ENCODE measurements at regions of chr18 and their contacts with region 1.

Region 1: DNA sequence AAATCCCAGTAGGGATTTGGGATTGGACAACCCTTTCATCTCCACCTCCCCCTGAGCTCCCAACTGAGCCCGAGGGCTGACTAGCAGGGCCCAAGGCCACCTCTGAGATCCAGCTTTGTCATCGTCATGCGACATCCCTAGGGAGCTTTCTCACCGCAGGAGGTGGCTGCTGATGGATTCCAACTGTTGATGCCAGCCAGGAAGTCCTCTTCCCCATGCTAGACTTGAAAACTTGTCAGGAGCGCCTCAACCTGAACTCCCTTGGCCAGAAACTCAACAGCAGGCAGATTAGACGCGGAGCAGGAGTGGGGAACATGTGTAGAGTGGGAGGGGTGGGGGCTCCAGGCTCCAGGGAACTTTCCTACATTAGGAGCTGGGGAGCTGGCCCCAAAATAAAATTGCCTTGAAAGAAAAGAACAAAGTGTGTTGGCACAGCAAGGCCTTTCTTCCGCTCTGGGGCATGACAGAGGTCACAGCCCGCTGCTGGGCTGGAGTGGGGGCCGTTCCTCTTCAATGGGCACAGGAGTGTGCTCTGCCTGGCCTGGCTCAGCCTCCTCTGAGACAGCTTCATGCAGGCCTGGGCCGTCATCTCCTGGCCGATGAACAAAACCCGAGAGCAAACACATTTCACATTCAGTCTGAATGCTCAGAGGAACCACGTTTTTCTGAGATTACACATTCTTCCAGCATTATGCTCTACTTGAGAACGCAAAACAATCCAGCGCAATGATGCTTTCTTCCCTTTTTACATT is 34.5 kb downstream of the EMILIN2 start:
- DNase-seq: peak; percentile 85 to 86
- H3K4me3 ChIP-seq: no peak overlapping the region
- H3K27ac ChIP-seq: peak overlapping the region; percentile 61
- H3K4me1 ChIP-seq: peaks cover 0 to 39% (median 23%) of the 10 kb centered on the region in 4 donors
- H3K27me3 ChIP-seq: no peaks in the 10 kb centered on the region
- CTCF ChIP-seq: no peak

Region 2: GRCh38 chr18:2846636-2847364 is 34.5 kb before region 1 on chr18 and contains the start of gene EMILIN2:
- intact Hi-C with region 1: loop called (anchors 2 kb)
- DNase-seq: peak; percentile 88
- H3K4me3 ChIP-seq: peak within 1 kb of the TSS; percentile 51 to 64
- H3K27ac ChIP-seq: peak within 1 kb of the TSS; percentile 61 to 64
- H3K4me1 ChIP-seq: peaks cover 0 to 21% (median 15%) of the 10 kb centered on the region in 4 donors
- H3K27me3 ChIP-seq: peaks cover 0 to 10% of the 10 kb centered on the region in 2 donors
- CTCF ChIP-seq: no peak

Region 3: DNA sequence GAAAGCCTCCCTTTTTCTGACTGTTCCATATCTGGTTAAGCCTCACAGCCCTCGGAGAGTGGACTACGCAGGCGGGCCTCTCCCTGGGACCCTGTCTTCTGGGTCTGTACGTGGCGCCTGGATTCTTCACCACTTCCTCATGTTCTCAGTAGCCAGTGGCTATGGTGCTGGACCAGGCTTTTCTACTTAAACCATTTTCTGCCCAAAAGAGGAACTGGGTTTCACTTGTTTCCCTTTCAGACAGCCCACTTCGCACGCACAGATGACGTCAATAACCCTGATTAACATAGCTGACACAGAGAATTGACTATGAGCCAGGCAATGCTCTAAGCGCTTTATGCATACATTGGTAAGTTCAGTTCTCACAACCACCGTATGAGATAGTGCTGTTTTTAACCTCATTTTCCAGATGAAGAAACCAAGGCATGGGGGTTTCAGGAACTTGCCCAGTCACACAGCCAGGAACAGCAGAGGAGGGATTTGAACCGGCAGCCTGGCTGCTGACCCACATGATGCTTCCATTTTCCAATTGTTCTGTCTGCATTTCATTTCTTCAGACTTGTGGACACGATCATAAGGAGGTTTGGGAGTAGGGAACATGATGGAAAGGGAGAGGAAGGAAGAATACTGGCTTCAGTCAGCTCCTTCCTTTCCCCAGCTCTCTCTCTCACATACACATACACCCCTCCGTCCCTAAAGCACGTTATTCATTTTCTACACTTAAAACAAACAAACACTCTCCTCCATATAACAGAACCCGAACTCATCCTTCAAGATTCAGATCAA is 296.8 kb after region 1 on chr18:
- intact Hi-C with region 1: no loop called
- DNase-seq: peak; percentile 79 to 81
- H3K4me3 ChIP-seq: no peak overlapping the region
- H3K27ac ChIP-seq: peak overlapping the region; percentile 35 to 58
- H3K4me1 ChIP-seq: peaks cover 0 to 46% (median 8%) of the 10 kb centered on the region in 4 donors
- H3K27me3 ChIP-seq: no peaks in the 10 kb centered on the region
- CTCF ChIP-seq: no peak